PC-9 (cell line): ENCODE measurements at regions of chr19 and their contacts with region 1.

Region 1: DNA sequence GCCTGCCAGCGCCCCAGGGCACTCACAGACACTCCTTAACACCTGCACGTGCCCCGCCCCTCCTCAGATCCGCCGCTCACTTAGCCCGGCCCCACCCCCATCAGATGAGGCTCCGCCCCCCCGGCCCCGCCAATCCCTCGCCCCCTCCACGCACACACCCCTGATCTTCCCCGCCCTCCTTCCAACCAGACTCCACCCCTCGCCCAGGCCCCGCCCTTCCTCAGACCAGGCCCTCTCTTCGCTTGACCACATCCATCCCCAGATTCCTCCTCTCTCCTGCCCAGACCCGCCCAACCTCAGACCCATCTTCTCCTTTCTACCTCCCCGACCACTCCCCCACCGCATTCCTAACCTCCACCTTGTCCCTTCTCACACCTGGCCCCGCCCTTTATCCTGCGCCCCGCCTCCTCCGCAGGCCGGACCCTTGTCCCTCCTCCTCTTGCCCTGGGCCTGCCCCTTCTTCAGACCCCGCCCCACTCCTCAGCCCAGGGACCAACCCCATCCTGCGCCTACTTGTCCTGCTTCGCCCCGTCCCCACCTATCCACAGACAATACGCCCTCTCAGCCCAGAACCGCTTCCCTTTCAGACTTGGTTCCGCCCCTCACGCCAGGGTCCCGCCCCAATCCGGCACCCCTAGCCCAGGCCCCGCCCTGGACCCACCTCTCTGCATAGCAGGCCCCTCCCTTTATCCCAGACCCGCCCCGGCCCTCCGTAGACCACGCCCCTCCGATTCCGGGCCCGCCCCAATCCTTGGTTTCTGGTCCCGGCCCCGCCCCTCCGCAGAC is 452 bp upstream of the KLHL26 start:
- DNase-seq: peak; percentile 91 to 98
- H3K4me3 ChIP-seq: peak overlapping the region; percentile 94
- H3K27ac ChIP-seq: no peak overlapping the region
- H3K4me1 ChIP-seq: peaks cover 18% of the 10 kb centered on the region
- H3K27me3 ChIP-seq: no peaks in the 10 kb centered on the region
- CTCF ChIP-seq: no peak

Region 2: DNA sequence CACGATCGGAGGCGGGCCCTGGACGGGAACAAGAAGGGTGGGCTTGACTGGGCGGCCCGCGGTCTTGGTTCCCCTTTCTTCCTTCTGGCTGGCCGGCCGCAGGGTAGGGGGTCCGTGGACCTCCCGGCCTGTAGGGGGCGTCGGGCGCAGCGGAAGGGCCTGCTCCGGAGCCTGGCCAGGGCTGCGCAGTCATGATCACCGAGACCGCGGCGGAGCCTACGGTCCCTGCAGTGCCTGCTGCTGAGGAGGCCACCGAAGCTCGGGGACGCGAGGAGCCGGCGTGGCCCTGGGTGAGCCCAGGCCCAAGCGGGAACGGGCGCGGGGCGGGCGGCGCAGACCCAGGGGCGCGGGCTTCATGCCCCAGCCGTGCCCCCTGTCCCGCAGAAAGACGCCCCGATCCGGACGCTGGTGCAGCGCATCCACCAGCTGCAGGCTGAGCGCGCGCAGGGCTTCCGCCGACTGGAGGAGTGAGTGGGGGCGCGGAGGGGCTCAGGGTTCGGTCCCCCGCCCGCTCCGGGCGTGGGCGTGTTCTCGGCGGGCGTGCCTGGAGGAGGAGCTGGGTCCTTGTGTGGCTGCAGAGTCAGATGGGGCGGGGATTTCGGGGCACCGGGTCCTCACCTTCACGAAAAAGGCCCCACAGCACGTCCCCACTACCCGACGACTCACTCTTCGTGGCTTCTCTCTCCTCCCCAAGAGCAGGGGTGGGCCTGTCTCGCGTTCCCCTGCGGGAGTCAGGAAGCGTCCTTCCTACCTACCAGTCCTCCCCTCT is 47.6 kb before region 1 on chr19 and contains the start of gene REX1BD:
- CTCF ChIA-PET with region 1: no interaction called
- POLR2A ChIA-PET with region 1: no interaction called
- intact Hi-C with region 1: no loop called
- DNase-seq: peak; percentile 66 to 81
- H3K4me3 ChIP-seq: peak within 1 kb of the TSS; percentile 79
- H3K27ac ChIP-seq: peak within 1 kb of the TSS; percentile 64
- H3K4me1 ChIP-seq: peaks cover 11% of the 10 kb centered on the region
- H3K27me3 ChIP-seq: no peaks in the 10 kb centered on the region
- CTCF ChIP-seq: peak; percentile 92
- total RNA-seq, gene REX1BD: 44.8 and 64.3 TPM in 2 replicates

Region 3: DNA sequence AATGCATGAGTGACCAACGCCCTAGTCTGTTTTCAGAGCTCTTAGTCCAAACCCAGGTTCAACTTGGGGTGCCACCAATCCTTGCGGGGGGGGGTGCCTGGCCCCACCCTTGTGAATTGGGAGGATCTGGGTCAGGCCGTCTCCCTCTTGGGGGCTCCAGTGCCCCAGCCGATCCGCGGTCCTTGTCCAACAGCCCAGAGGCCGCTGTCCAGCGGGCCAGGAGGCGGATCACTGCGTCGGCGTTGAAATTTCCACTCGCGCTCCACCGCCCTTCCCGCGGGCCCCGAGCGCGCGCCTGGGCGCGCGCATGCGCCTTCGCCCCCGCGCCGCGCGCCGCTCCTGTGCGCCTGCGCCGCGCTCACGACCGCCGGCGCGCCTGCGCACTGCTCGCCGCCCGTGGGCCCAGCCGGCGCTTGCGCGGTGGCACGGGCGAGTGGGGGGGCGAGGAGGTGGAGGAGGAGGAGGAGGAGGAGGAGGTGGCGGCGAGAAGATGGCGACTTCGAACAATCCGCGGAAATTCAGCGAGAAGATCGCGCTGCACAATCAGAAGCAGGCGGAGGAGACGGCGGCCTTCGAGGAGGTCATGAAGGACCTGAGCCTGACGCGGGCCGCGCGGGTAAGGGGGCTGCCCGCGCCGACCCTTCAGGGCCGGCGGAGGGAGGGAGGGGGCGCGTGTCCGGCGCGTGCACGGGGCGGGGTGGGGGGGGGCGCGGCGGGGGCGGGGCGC is 47.0 kb after region 1 on chr19 and contains the start of gene CRTC1:
- CTCF ChIA-PET with region 1: no interaction called
- POLR2A ChIA-PET with region 1: no interaction called
- intact Hi-C with region 1: loop called (anchors 2 kb)
- DNase-seq: peak; percentile 65 to 94
- H3K4me3 ChIP-seq: peak within 1 kb of the TSS; percentile 80
- H3K27ac ChIP-seq: 0 out of 2 replicates have a peak within 1 kb of the TSS, but pooled peaks have one; percentile 6
- H3K4me1 ChIP-seq: peaks cover 31% of the 10 kb centered on the region
- H3K27me3 ChIP-seq: no peaks in the 10 kb centered on the region
- CTCF ChIP-seq: no peak
- total RNA-seq, gene CRTC1: 13.3 and 16.6 TPM in 2 replicates

Region 4: GRCh38 chr19:18756896-18757295 is 120.5 kb after region 1 on chr19:
- CTCF ChIA-PET with region 1: no interaction called
- POLR2A ChIA-PET with region 1: interaction called, 14 read pairs
- intact Hi-C with region 1: no loop called
- DNase-seq: peak in 1 of 2 experiments; percentile 87
- H3K4me3 ChIP-seq: no peak overlapping the region
- H3K27ac ChIP-seq: no peak overlapping the region
- H3K4me1 ChIP-seq: peaks cover under 1% of the 10 kb centered on the region
- H3K27me3 ChIP-seq: no peaks in the 10 kb centered on the region
- CTCF ChIP-seq: no peak

Region 5: DNA sequence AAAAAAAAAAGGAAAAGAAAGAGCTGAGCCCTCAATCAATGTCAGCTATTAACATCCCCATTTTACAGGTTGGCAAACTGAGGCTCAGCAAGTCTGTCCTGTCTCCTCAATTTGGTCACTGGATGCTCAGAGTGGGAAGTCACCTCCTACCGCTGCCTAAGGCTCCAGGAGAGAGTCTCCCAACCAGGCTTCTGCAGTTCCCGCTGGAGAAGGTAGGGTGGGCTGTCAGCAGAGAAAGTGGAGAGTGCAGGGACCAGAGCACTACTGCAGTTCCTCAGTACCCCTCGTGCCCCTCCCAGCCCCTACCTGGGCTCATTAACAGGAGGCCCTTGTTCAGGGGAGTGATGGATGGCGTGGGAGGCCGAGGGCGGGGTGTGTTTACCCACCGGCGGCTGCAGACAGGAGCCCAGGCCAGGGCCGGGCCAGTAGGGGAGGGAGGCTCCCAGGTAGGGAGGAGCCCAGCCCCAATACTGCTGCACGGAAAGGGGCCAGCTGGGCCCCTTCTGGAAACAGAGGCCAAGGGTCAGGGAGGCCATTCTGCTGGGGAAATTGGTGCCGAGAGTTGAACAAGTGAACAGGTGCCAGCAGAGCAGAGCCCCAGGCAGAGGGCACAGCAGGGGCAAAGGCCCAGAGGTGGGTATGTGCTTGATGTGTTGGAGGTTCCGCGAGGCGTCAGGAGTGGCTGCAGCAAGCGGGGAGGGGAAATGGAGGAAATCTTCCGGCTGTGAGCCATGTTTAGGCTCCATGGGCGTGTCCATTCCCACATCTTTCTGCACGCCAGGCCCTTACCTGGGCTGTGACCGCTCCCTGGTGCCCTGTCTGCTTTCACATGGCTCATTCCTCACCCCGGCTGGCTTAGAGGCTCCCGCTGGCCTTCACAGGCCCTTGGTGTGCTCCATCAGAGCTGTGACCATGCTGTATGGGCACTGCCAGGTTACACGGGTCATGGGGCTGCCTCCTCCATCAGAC is 162.3 kb after region 1 on chr19:
- CTCF ChIA-PET with region 1: interaction called, 14 read pairs
- POLR2A ChIA-PET with region 1: no interaction called
- intact Hi-C with region 1: no loop called
- DNase-seq: peak in 1 of 2 experiments; percentile 31
- H3K4me3 ChIP-seq: no peak overlapping the region
- H3K27ac ChIP-seq: no peak overlapping the region
- H3K4me1 ChIP-seq: no peaks in the 10 kb centered on the region; the same call in 1 of the 2 replicates
- H3K27me3 ChIP-seq: peaks cover 12% of the 10 kb centered on the region
- CTCF ChIP-seq: no peak